AG04450 (cell line): ENCODE measurements at regions of chr9 and their contacts with region 1.

Region 1: GRCh38 chr9:129962889-129963703 is 79.9 kb downstream of the FNBP1 start:
- DNase-seq: no peak
- H3K4me3 ChIP-seq: peak overlapping the region; percentile 51
- H3K27ac ChIP-seq: peak overlapping the region; percentile 65
- H3K27me3 ChIP-seq: no peaks in the 10 kb centered on the region
- CTCF ChIP-seq: no peak

Region 2: DNA sequence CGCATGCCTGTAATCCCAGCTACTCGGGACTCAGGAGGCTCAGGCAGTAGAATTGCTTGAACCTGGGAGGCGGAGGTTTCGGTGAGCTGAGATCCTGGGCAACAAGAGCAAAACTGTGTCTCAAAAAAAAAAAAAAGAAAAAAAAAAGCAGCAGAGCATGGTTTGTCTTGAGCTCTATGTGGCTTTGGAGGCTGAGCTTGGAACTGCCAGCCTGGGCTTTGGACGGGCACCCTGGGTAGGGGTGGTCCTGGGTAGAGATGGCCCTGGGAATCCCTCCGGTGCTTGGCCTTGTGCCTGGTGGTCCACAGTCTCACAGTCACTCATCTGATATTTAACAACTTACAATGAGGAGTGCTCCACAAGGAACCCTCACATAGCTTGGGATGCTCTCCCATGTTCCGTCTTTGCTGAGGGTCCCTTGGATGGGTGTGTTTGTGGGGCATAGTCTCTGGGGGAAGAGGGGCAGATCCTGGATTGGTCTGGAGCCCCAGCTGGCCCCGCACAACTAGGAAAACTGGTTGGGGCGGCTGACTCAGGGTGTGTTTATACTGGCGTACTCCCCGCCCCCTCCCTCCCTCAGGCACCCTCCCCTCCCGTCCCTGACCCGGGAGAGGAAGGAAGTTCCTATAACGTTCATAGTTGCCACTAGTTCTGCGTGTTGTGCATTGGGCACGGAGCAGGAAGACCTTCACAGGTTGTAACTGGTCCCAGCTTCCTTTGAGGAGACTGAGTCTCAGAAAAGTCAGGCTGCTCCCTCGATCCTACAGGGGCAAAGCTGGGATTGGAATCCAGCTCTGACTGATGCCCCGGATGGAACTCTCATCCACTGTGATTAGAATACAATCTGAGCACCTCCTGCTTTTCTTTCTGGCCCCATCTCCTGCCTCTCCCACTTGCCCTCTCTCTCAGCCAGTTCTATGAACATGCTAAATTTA is 796.2 kb before region 1 on chr9:
- CTCF ChIA-PET with region 1: no interaction called
- POLR2A ChIA-PET with region 1: interaction called, 14 read pairs
- DNase-seq: no peak
- H3K4me3 ChIP-seq: peak overlapping the region; percentile 42
- H3K27ac ChIP-seq: peak overlapping the region; percentile 98
- H3K27me3 ChIP-seq: no peaks in the 10 kb centered on the region
- CTCF ChIP-seq: no peak

Region 3: GRCh38 chr9:129938291-129938979 is 24.7 kb before region 1 on chr9:
- CTCF ChIA-PET with region 1: interaction called, 3 read pairs
- POLR2A ChIA-PET with region 1: interaction called, 11 read pairs
- DNase-seq: peak; percentile 32
- H3K4me3 ChIP-seq: no peak overlapping the region
- H3K27ac ChIP-seq: peak overlapping the region; percentile 39
- H3K27me3 ChIP-seq: no peaks in the 10 kb centered on the region
- CTCF ChIP-seq: no peak

Region 4: DNA sequence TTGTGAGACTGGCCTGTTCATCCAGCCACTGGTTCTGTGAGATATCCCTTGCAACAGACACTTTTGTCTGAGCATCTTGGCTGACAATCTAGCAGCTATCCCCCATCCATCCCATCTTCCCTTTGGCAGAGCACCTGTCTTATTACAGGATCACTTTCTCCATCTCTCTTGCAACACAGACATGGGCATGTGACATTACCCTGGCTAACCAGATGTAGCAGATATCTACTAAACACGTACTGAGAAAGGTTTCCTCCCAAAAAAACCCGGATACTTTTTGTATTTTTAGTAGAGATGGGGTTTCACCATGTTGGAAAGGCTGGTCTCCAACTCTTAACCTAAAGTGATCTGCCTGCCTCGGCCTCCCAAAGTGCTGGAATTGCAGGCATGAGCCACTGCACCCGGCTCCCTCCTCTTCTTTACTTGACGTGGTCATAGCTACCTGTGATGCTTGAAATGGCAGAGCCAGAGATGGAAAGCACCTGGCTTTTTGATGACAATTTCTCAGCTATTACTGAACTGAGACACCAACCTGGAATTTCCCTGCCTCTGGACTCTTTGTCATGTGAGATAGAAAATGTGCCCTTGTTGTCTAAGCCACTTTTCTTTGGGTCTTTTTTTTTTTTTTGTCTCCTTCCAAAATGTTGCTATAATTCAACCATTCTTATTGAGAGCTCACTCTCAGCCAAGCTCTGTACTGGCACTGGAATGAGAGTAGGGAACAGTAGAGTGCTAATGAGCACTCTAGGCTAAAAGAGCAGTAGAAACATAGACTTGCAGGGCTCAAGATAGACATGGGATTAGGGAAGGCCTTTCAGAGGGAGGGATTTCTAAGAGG is 47.3 kb after region 1 on chr9:
- CTCF ChIA-PET with region 1: no interaction called
- POLR2A ChIA-PET with region 1: no interaction called
- DNase-seq: no peak
- H3K4me3 ChIP-seq: no peak overlapping the region
- H3K27ac ChIP-seq: no peak overlapping the region
- H3K27me3 ChIP-seq: no peaks in the 10 kb centered on the region
- CTCF ChIP-seq: no peak